CD4-positive, alpha-beta memory T cell (primary cell): ENCODE measurements at regions of chr14 and their contacts with region 1.

Region 1: GRCh38 chr14:64294672-64295413 is 672 bp upstream of the ESR2 start:
- DNase-seq: peak; percentile 75 to 80 (median 76)
- H3K4me3 ChIP-seq: peak overlapping the region; percentile 49 to 62
- H3K4me3 Mint-ChIP-seq: peak overlapping the region; percentile 79 to 88 (median 82)
- H3K27ac ChIP-seq: no peak overlapping the region
- H3K27ac Mint-ChIP-seq: peak overlapping the region in 3 of 7 donors; percentile 25 to 45 (median 27)
- H3K4me1 ChIP-seq: peaks cover 19% of the 10 kb centered on the region
- H3K4me1 Mint-ChIP-seq: peaks cover 4 to 24% (median 15%) of the 10 kb centered on the region in 4 donors
- H3K27me3 ChIP-seq: peaks cover 5% of the 10 kb centered on the region
- H3K27me3 Mint-ChIP-seq: peaks cover 6 to 9% of the 10 kb centered on the region in 2 donors

Region 2: GRCh38 chr14:64005822-64006221 is 289.0 kb before region 1 on chr14:
- CTCF ChIA-PET with region 1: no interaction called
- POLR2A ChIA-PET with region 1: no interaction called
- intact Hi-C with region 1: loop called (anchors 2 kb)
- DNase-seq: no peak
- H3K4me3 ChIP-seq: no peak overlapping the region
- H3K4me3 Mint-ChIP-seq: no peak overlapping the region
- H3K27ac ChIP-seq: no peak overlapping the region
- H3K27ac Mint-ChIP-seq: peak overlapping the region in 5 of 7 donors; percentile 1 to 72 (median 4)
- H3K4me1 ChIP-seq: no peaks in the 10 kb centered on the region
- H3K4me1 Mint-ChIP-seq: peaks cover 0 to 9% (median 4%) of the 10 kb centered on the region in 4 donors
- H3K27me3 ChIP-seq: no peaks in the 10 kb centered on the region
- H3K27me3 Mint-ChIP-seq: no peaks in the 10 kb centered on the region

Region 3: DNA sequence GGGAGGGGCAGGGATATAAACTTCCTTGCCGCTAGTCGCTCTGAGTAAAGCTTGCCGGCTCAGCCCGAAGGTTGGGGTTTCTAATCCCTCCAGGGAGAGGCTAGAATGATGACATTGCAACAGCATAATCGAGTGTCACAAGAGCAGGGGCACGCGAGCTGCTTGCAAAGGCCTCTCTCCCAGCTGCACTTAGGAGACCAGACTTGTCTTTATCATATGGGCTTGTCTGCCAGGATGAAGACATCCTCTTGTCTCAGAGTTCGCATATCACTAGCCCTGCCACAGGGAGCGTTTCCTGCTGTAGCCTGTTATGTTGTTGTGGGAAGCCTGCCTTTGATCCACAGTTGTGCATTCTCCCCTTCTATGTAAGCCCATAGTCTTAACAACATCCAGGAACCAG is 180.7 kb before region 1 on chr14:
- CTCF ChIA-PET with region 1: no interaction called
- POLR2A ChIA-PET with region 1: no interaction called
- intact Hi-C with region 1: no loop called
- DNase-seq: no peak
- H3K4me3 ChIP-seq: no peak overlapping the region
- H3K4me3 Mint-ChIP-seq: no peak overlapping the region
- H3K27ac ChIP-seq: no peak overlapping the region
- H3K27ac Mint-ChIP-seq: peak overlapping the region in 2 of 7 donors; percentile 29 to 60
- H3K4me1 ChIP-seq: no peaks in the 10 kb centered on the region
- H3K4me1 Mint-ChIP-seq: no peaks in the 10 kb centered on the region
- H3K27me3 ChIP-seq: no peaks in the 10 kb centered on the region
- H3K27me3 Mint-ChIP-seq: no peaks in the 10 kb centered on the region

Region 4: GRCh38 chr14:64159588-64159987 is 135.3 kb before region 1 on chr14:
- CTCF ChIA-PET with region 1: interaction called, 3 read pairs
- POLR2A ChIA-PET with region 1: no interaction called
- intact Hi-C with region 1: loop called (anchors 10 kb)
- DNase-seq: no peak
- H3K4me3 ChIP-seq: no peak overlapping the region
- H3K4me3 Mint-ChIP-seq: no peak overlapping the region
- H3K27ac ChIP-seq: no peak overlapping the region
- H3K27ac Mint-ChIP-seq: no peak overlapping the region
- H3K4me1 ChIP-seq: no peaks in the 10 kb centered on the region
- H3K4me1 Mint-ChIP-seq: no peaks in the 10 kb centered on the region
- H3K27me3 ChIP-seq: no peaks in the 10 kb centered on the region
- H3K27me3 Mint-ChIP-seq: no peaks in the 10 kb centered on the region

Region 5: DNA sequence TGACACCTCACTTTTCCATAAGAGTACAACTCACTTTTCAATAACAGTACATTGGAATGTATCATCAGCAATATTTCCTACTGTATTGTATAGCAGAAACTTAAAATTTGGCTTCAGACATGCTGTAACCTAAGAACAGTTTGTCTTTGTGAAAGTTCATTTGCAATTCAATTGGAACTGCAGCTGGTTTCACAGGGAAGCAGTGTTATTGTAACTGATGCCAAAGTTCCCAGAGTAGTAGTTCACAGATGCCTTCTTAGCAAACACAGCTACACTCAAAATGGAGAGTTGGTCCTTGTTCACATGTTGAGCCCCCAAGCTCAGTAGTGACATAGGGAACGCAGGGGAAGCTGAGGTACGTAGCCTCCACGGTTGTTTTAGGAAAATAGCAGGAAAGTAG is 278.3 kb after region 1 on chr14:
- CTCF ChIA-PET with region 1: no interaction called
- POLR2A ChIA-PET with region 1: no interaction called
- intact Hi-C with region 1: no loop called
- DNase-seq: no peak
- H3K4me3 ChIP-seq: no peak overlapping the region
- H3K4me3 Mint-ChIP-seq: no peak overlapping the region
- H3K27ac ChIP-seq: no peak overlapping the region
- H3K27ac Mint-ChIP-seq: no peak overlapping the region
- H3K4me1 ChIP-seq: no peaks in the 10 kb centered on the region
- H3K4me1 Mint-ChIP-seq: no peaks in the 10 kb centered on the region
- H3K27me3 ChIP-seq: no peaks in the 10 kb centered on the region
- H3K27me3 Mint-ChIP-seq: no peaks in the 10 kb centered on the region